ENCODE measurements at regions of chr6 and their contacts with region 1.

Region 1: GRCh38 chr6:159862103-159862502 is 28.7 kb upstream of the MAS1 start:
- DNase-seq: no peak
- H3K4me3 Mint-ChIP-seq: peak overlapping the region; percentile 21
- H3K27ac Mint-ChIP-seq: no peak overlapping the region
- H3K4me1 Mint-ChIP-seq: peaks cover 13% of the 10 kb centered on the region
- H3K27me3 Mint-ChIP-seq: peaks cover 26% of the 10 kb centered on the region

Region 2: DNA sequence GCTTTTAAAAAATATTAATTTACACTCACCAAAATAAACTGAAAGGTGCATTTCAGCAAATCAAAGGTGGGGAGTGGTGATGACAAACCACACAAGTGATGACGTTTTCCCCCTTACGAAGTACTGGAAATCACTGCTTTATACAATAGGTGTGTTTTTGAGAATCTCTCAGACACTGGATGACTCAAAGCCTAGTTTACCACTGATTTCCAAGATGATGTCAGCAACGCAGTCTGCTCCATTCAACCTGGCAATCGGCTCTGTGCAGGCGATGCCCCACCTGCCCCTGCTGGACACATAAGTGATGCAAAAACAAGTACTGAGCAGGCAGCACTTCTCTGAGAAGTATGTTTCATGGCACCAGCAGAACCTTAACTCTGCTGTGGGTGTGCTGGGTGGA is 283.5 kb before region 1 on chr6:
- intact Hi-C with region 1: no loop called
- DNase-seq: no peak
- H3K4me3 Mint-ChIP-seq: no peak overlapping the region
- H3K27ac Mint-ChIP-seq: no peak overlapping the region
- H3K4me1 Mint-ChIP-seq: no peaks in the 10 kb centered on the region
- H3K27me3 Mint-ChIP-seq: peaks cover 2% of the 10 kb centered on the region

Region 3: DNA sequence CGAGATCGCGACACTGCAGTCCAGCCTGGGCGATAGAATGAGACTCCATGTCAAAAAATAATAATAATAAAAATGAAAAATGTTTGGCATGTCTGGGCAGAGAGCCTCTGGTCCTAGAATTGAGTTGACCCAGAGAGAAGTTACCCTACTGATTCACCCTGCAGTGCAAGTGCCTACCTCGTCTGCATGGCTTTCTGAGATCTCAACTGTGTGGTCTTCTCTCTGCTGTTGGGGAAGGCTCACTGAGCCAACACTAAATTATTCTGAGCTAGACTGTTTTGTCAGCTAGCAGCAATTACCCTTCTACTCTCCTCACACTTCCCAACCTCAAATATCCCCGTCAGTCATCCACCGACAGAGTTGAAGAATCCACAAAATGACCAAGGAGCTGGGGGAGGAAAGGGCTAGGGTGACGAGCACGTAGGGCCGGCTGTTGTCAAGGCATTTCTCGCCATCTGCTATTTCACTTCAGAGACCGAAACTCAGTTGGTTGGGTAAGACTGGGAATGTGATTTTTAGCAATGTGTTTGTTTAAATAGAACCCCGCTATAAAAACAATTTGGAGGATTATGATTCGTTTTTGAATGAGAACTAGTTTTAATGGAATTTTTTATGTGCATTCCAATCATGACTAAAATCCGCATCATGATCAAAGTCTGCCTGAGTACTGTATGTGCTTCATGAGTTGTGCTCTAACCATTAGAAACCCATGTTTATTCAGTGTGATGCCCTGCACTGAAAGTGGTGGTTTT is 38.1 kb after region 1 on chr6:
- intact Hi-C with region 1: no loop called
- DNase-seq: no peak
- H3K4me3 Mint-ChIP-seq: no peak overlapping the region
- H3K27ac Mint-ChIP-seq: no peak overlapping the region
- H3K4me1 Mint-ChIP-seq: no peaks in the 10 kb centered on the region
- H3K27me3 Mint-ChIP-seq: no peaks in the 10 kb centered on the region

Region 4: GRCh38 chr6:159941286-159942113 is 79.4 kb after region 1 on chr6:
- intact Hi-C with region 1: loop called (anchors 1 kb)
- DNase-seq: peak; percentile 82
- H3K4me3 Mint-ChIP-seq: no peak overlapping the region
- H3K27ac Mint-ChIP-seq: no peak overlapping the region
- H3K4me1 Mint-ChIP-seq: peaks cover 6% of the 10 kb centered on the region
- H3K27me3 Mint-ChIP-seq: peaks cover 18% of the 10 kb centered on the region

Region 5: DNA sequence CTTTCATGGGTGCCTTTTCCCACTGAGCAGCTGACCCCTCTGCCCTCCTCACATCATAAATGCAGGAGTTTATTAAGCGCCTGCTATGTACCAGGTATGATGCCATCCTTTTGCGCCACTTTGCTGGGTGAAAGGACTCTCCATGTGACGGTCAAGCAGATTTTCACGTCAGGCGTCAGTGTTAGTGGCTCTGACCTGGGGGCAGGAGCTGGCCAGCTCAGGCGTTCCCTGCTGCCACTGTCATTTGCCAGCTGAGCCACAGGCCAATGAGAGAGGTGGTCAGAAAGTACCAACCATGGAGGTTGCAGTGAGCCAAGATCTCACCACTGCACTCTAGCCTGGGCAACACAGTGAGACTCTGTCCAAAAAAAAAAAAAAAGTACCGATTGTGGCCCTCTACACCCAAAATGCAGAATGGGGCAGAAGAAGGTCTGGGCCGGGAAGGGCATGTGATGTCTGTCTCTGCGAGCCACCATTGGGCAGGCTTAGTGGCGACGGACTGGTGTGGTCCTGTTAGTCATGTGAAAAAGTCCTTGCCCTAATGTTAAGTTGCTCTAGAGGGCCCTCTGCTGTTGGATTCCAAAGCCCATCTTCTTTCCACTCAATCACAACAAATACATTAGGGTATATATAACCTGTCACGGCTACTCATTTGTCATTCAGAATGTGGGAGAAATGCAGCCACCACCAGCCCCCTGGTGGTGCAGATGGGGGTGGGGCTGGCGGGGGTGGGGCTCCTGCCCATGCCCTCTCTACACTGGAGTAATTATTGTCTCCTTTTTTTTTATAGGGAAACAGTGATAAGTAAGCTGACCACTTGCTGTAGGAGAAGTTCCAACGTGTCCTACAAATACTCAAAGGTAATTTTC is 241.1 kb after region 1 on chr6:
- intact Hi-C with region 1: loop called (anchors 5 kb)
- DNase-seq: peak; percentile 72
- H3K4me3 Mint-ChIP-seq: no peak overlapping the region
- H3K27ac Mint-ChIP-seq: no peak overlapping the region
- H3K4me1 Mint-ChIP-seq: peaks cover 15% of the 10 kb centered on the region
- H3K27me3 Mint-ChIP-seq: no peaks in the 10 kb centered on the region

Region 6: DNA sequence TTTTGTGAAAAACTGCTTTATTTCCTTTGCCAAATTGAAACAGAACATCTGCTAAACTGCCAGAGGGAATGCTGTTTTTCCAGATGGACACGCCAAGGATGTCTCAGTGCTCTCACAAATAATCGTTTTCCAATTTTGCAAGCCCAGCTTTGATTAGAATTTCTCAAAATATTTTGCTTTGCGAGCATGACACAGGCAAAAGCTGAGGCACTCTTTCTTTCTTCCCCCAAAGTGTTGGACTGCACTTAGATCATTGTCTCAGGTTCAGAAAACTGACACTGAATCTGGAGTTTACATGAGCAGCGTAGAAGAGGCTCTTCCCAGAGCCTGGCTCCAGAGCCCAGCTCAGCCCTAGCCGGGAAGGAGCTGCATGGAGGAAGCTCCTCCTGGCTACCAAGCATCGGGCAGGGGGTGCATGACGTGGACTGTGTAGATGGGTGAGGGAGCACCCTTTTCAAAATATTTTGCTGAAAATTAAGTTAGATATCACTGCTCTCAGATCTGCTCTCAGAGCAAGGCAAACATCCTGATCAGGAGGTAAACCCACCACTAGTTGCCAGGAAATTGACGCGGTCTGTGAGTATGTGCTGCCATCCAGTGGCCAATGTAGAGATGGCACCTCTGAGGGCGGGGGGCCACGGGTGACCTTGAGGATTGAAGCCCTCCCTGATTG is 593.6 kb after region 1 on chr6:
- intact Hi-C with region 1: loop called (anchors 5 kb)
- DNase-seq: peak; percentile 92
- H3K4me3 Mint-ChIP-seq: no peak overlapping the region
- H3K27ac Mint-ChIP-seq: no peak overlapping the region
- H3K4me1 Mint-ChIP-seq: peaks cover 26% of the 10 kb centered on the region
- H3K27me3 Mint-ChIP-seq: peaks cover 43% of the 10 kb centered on the region